Tibial artery (tissue), 4 donors: ENCODE measurements at regions of chr20 and their contacts with region 1.

Region 1: GRCh38 chr20:46350201-46350985 is 42.1 kb upstream of the CDH22 start:
- DNase-seq: no peak
- H3K4me3 ChIP-seq: no peak overlapping the region
- H3K27ac ChIP-seq: no peak overlapping the region
- H3K4me1 ChIP-seq: peaks cover 0 to 18% (median 3%) of the 10 kb centered on the region in 4 donors
- H3K27me3 ChIP-seq: no peaks in the 10 kb centered on the region
- CTCF ChIP-seq: no peak

Region 2: GRCh38 chr20:46089417-46090388 is 260.7 kb before region 1 on chr20 and contains the start of gene NCOA5:
- intact Hi-C with region 1: loop called (anchors 10 kb)
- DNase-seq: peak; percentile 95 to 98
- H3K4me3 ChIP-seq: peak within 1 kb of the TSS; percentile 74 to 87
- H3K27ac ChIP-seq: peak within 1 kb of the TSS; percentile 97
- H3K4me1 ChIP-seq: peaks cover 0 to 47% (median 39%) of the 10 kb centered on the region in 4 donors
- H3K27me3 ChIP-seq: no peaks in the 10 kb centered on the region
- CTCF ChIP-seq: no peak

Region 3: GRCh38 chr20:46501337-46501942 is 151.0 kb after region 1 on chr20:
- intact Hi-C with region 1: no loop called
- DNase-seq: no peak
- H3K4me3 ChIP-seq: no peak overlapping the region
- H3K27ac ChIP-seq: no peak overlapping the region
- H3K4me1 ChIP-seq: no peaks in the 10 kb centered on the region
- H3K27me3 ChIP-seq: peaks cover 0 to 5% of the 10 kb centered on the region in 2 donors
- CTCF ChIP-seq: no peak